CD4-positive, alpha-beta T cell (primary cell): ENCODE measurements at regions of chr19 and their contacts with region 1.

Region 1: DNA sequence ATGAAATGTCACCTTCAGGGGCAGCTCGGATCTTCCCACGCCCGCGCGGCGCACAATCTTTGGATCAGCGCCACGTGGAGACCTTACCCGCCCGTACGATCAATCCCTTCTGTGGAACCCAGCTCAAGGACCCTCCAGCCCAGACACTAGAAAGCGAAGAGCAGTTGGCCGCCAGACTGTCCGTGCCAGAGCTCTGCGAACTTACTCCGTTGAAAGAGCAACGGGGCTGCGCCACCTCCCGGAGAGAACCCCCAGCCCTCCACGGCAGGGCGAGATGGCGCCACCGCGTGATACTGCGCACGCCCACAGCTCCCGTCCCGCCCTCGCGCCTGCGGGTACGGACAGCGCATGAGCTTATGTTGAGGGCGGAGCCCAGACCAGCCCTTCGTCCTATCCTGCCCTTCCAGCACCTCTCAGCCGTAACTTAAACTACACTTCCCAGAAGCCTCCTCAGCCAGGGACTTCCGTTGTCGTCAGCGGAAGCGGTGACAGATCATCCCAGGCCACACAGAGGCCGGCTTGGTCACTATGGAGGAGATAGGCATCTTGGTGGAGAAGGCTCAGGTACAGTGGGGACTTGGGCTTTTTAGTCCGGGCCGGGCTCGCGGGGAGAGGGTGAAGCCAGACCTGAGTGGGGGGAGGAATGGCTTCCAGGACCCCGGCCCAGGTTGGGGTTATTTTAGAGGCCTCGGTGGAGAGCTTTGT is at the start of gene PSMC4:
- DNase-seq: peak; percentile 97 to 100 (median 98)
- ATAC-seq: peak; percentile 96
- H3K4me3 ChIP-seq: peak within 1 kb of the TSS; percentile 77
- H3K4me3 Mint-ChIP-seq: peak within 1 kb of the TSS; percentile 98
- H3K27ac ChIP-seq: peak within 1 kb of the TSS; percentile 87 to 91
- H3K27ac Mint-ChIP-seq: peak within 1 kb of the TSS; percentile 97
- H3K4me1 ChIP-seq: peaks cover 51% of the 10 kb centered on the region
- H3K4me1 Mint-ChIP-seq: peaks cover 58% of the 10 kb centered on the region
- H3K27me3 ChIP-seq: no peaks in the 10 kb centered on the region
- H3K27me3 Mint-ChIP-seq: no peaks in the 10 kb centered on the region
- CTCF ChIP-seq: peak; percentile 88
- total RNA-seq, gene PSMC4: 61.3 to 67.4 TPM

Region 2: GRCh38 chr19:39792999-39793546 is 177.8 kb before region 1 on chr19:
- CTCF ChIA-PET with region 1: interaction called, 15 read pairs
- POLR2A ChIA-PET with region 1: interaction called, 6 read pairs
- intact Hi-C with region 1: loop called in 1 of 2 experiments (anchors 5 kb)
- DNase-seq: peak; percentile 52 to 83 (median 64)
- ATAC-seq: peak; percentile 94
- H3K4me3 ChIP-seq: peak overlapping the region; percentile 58
- H3K4me3 Mint-ChIP-seq: peak overlapping the region; percentile 81
- H3K27ac ChIP-seq: no peak overlapping the region
- H3K27ac Mint-ChIP-seq: no peak overlapping the region
- H3K4me1 ChIP-seq: peaks cover 7% of the 10 kb centered on the region
- H3K4me1 Mint-ChIP-seq: no peaks in the 10 kb centered on the region
- H3K27me3 ChIP-seq: no peaks in the 10 kb centered on the region
- H3K27me3 Mint-ChIP-seq: peaks cover 11% of the 10 kb centered on the region
- CTCF ChIP-seq: peak; percentile 90

Region 3: DNA sequence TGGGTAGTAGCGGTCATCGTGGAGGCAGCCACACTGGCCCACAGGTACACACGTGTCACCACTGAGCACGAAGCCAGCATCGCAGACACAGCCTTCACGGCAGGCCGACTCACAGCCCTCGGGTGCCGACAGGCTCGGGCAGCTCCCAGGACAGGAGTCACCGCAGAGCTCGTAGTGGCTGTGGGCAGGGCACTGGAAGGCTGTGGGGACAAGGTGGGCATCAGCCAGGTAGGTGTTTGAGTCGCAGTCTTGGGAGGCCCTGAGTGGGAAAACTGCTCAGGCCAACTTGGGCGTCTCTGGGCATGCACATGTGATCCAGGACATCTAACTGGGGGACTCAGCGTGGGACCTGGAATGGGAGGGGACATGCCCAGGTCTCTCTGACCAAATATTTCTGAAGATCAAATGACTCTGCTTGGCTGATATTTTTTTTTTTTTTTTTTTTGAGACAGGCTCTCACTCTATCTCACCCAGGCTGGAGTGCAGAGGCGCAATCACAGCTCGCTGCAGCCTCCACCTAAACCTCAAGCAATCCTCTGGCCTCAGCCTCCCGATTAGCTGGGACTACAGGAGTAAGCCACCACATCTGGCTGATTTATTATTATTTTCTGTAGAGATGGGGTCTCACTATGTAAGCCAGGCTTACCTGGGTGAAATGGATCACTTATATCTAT is 80.8 kb before region 1 on chr19:
- CTCF ChIA-PET with region 1: interaction called, 6 read pairs
- POLR2A ChIA-PET with region 1: no interaction called
- intact Hi-C with region 1: loop called in 1 of 2 experiments (anchors 2 kb)
- DNase-seq: no peak
- ATAC-seq: no peak
- H3K4me3 ChIP-seq: no peak overlapping the region
- H3K4me3 Mint-ChIP-seq: no peak overlapping the region
- H3K27ac ChIP-seq: no peak overlapping the region
- H3K27ac Mint-ChIP-seq: no peak overlapping the region
- H3K4me1 ChIP-seq: peaks cover 4% of the 10 kb centered on the region
- H3K4me1 Mint-ChIP-seq: no peaks in the 10 kb centered on the region
- H3K27me3 ChIP-seq: no peaks in the 10 kb centered on the region
- H3K27me3 Mint-ChIP-seq: no peaks in the 10 kb centered on the region
- CTCF ChIP-seq: no peak

Region 4: GRCh38 chr19:39934584-39935363 is 36.1 kb before region 1 on chr19 and contains the start of gene FCGBP:
- CTCF ChIA-PET with region 1: interaction called, 10 read pairs
- POLR2A ChIA-PET with region 1: interaction called, 172 read pairs
- intact Hi-C with region 1: loop called in 1 of 2 experiments (anchors 5 kb)
- DNase-seq: no peak
- ATAC-seq: no peak
- H3K4me3 ChIP-seq: no peak within 1 kb of the TSS
- H3K4me3 Mint-ChIP-seq: peak within 1 kb of the TSS; percentile 62
- H3K27ac ChIP-seq: peak within 1 kb of the TSS in 1 of 2 donors; percentile 24
- H3K27ac Mint-ChIP-seq: peak within 1 kb of the TSS; percentile 78
- H3K4me1 ChIP-seq: peaks cover 42% of the 10 kb centered on the region
- H3K4me1 Mint-ChIP-seq: peaks cover 76% of the 10 kb centered on the region
- H3K27me3 ChIP-seq: no peaks in the 10 kb centered on the region
- H3K27me3 Mint-ChIP-seq: no peaks in the 10 kb centered on the region
- CTCF ChIP-seq: no peak
- total RNA-seq, gene FCGBP: 16.3 to 19.1 TPM

Region 5: DNA sequence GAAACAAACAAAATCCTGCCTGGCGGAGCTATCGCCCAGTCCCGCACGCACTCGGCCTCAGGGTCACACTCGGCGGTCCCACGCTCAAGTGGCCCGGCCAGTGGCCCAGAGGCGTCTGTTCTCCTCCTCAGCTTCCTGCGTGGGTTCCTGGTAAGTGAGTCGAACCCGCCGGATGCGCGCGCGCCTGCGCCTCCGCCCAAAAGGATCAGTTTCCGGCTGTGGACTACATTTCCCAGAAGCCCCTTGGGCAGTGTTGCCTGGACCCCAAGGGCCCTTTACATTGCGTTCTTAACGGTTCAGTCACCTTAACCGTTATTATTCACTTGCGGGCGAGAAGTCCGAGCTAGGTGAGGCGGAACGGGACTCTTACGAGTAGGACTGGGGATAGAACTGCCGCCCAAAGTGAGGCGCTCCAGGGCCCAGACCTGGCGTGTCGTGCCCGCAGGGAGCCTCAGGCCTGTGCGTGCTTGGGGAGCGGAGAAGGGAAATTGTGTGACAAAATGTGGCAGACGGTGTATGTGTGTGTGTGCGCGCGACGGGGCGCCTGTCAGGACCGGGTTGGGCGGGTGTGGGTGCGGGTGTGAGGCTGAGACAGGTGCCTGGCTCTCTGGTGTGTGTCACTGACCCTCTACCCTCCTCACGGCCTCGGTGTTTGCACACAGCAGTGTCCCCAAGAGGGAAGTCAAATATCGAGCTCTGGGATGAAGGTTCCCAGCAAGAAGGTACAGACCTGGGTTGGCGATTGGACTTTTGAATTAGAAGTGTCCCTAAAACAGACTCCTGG is 26.2 kb after region 1 on chr19 and contains the start of gene ZNF546:
- CTCF ChIA-PET with region 1: interaction called, 13 read pairs
- POLR2A ChIA-PET with region 1: interaction called, 53 read pairs
- intact Hi-C with region 1: loop called (anchors 1 kb)
- DNase-seq: peak; percentile 81 to 96 (median 86)
- ATAC-seq: peak; percentile 92
- H3K4me3 ChIP-seq: peak within 1 kb of the TSS; percentile 71
- H3K4me3 Mint-ChIP-seq: peak within 1 kb of the TSS; percentile 96
- H3K27ac ChIP-seq: peak within 1 kb of the TSS; percentile 84 to 85
- H3K27ac Mint-ChIP-seq: peak within 1 kb of the TSS; percentile 84
- H3K4me1 ChIP-seq: peaks cover 24% of the 10 kb centered on the region
- H3K4me1 Mint-ChIP-seq: peaks cover 52% of the 10 kb centered on the region
- H3K27me3 ChIP-seq: no peaks in the 10 kb centered on the region
- H3K27me3 Mint-ChIP-seq: no peaks in the 10 kb centered on the region
- CTCF ChIP-seq: no peak
- total RNA-seq, gene ZNF546: 2.4 to 3.8 TPM

Region 6: DNA sequence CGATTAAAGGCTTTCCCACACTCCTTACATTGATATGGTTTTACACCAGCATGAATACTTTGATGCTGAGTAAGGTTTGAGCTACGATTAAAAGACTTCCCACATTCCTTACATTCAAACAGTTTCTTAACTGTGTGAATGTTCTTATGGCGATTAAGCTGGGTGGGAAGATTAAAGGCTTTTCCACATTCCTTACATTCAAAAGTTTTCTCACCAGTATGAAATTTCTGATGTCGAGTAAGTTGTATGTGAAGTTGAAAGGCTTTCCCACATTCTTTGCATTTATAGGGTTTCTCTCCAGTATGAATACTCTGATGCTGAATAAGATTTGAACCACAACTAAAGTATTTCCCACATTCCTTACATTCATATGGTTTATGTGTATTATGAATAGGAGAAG is 65.2 kb after region 1 on chr19:
- CTCF ChIA-PET with region 1: no interaction called
- POLR2A ChIA-PET with region 1: no interaction called
- intact Hi-C with region 1: no loop called
- DNase-seq: no peak
- ATAC-seq: no peak
- H3K4me3 ChIP-seq: no peak overlapping the region
- H3K4me3 Mint-ChIP-seq: no peak overlapping the region
- H3K27ac ChIP-seq: no peak overlapping the region
- H3K27ac Mint-ChIP-seq: no peak overlapping the region
- H3K4me1 ChIP-seq: no peaks in the 10 kb centered on the region
- H3K4me1 Mint-ChIP-seq: no peaks in the 10 kb centered on the region
- H3K27me3 ChIP-seq: no peaks in the 10 kb centered on the region
- H3K27me3 Mint-ChIP-seq: no peaks in the 10 kb centered on the region
- CTCF ChIP-seq: no peak

Region 7: GRCh38 chr19:41353466-41354342 is 1382.9 kb after region 1 on chr19 and contains the start of gene TGFB1:
- CTCF ChIA-PET with region 1: no interaction called
- POLR2A ChIA-PET with region 1: no interaction called
- intact Hi-C with region 1: loop called in 1 of 2 experiments (anchors 10 kb)
- DNase-seq: peak; percentile 89 to 98 (median 94)
- ATAC-seq: peak; percentile 60
- H3K4me3 ChIP-seq: peak within 1 kb of the TSS; percentile 99
- H3K4me3 Mint-ChIP-seq: peak within 1 kb of the TSS; percentile 94
- H3K27ac ChIP-seq: peak within 1 kb of the TSS; percentile 82 to 94
- H3K27ac Mint-ChIP-seq: peak within 1 kb of the TSS; percentile 93
- H3K4me1 ChIP-seq: peaks cover 72% of the 10 kb centered on the region
- H3K4me1 Mint-ChIP-seq: peaks cover 81% of the 10 kb centered on the region
- H3K27me3 ChIP-seq: no peaks in the 10 kb centered on the region
- H3K27me3 Mint-ChIP-seq: no peaks in the 10 kb centered on the region
- CTCF ChIP-seq: peak; percentile 80
- total RNA-seq, gene TGFB1: 406 to 416 TPM